ENCODE measurements at regions of chr2 and their contacts with region 1.

Region 1: GRCh38 chr2:161238560-161239325 is 69.5 kb upstream of the PSMD14 start:
- DNase-seq: no peak
- ATAC-seq: peak; percentile 44
- H3K4me3 ChIP-seq: peak overlapping the region; percentile 76
- H3K27ac ChIP-seq: peak overlapping the region; percentile 31
- H3K4me1 ChIP-seq: peaks cover 20% of the 10 kb centered on the region
- H3K27me3 ChIP-seq: no peaks in the 10 kb centered on the region
- CTCF ChIP-seq: no peak
- EP300 ChIP-seq: no peak
- POLR2A ChIP-seq: 0 out of 2 replicates have a peak, but pooled peaks have one; percentile 29
- RAD21 ChIP-seq: no peak

Region 2: GRCh38 chr2:161122772-161123530 is 115.8 kb before region 1 on chr2:
- CTCF ChIA-PET with region 1: no interaction called
- POLR2A ChIA-PET with region 1: no interaction called
- RAD21 ChIA-PET with region 1: no interaction called
- SMC1A ChIA-PET with region 1: no interaction called
- in situ Hi-C with region 1: no loop called
- intact Hi-C with region 1: no loop called
- DNase-seq: no peak
- ATAC-seq: peak; percentile 81
- H3K4me3 ChIP-seq: no peak overlapping the region
- H3K27ac ChIP-seq: no peak overlapping the region; the same call in 1 of the 2 replicates
- H3K4me1 ChIP-seq: no peaks in the 10 kb centered on the region
- H3K27me3 ChIP-seq: no peaks in the 10 kb centered on the region
- CTCF ChIP-seq: no peak
- EP300 ChIP-seq: no peak
- POLR2A ChIP-seq: no peak
- RAD21 ChIP-seq: no peak

Region 3: DNA sequence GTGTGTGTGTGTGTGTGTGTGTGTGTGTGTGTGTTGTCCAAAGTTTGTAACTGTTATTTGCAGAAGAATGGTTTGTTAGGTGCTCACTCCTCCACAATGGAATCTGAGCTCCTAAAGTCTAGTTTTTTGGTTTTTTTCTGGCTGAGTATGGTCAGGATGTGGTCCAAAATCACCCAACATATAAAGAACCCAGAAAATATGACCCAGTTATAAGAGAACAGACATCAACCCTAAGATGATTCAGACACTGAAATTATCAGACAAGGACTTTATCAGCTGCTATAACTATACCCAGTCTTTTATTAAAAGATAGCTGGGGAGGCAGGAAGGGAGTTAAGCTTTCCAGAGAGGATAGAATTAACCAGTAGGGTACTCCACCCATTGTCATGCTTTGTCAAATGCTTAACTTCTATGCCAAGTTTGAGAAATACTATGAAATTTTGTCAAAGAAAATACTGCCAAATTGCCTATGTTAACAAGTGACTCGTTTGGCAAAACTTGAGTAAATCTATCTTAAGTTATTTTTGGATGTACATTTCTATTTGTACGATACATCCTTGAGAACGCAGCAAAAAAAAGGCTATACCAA is 21.1 kb before region 1 on chr2:
- CTCF ChIA-PET with region 1: interaction called, 52 read pairs
- POLR2A ChIA-PET with region 1: interaction called, 3 read pairs
- RAD21 ChIA-PET with region 1: interaction called, 17 read pairs
- SMC1A ChIA-PET with region 1: interaction called, 46 read pairs
- in situ Hi-C with region 1: no loop called
- intact Hi-C with region 1: no loop called
- DNase-seq: no peak
- ATAC-seq: no peak
- H3K4me3 ChIP-seq: no peak overlapping the region
- H3K27ac ChIP-seq: no peak overlapping the region
- H3K4me1 ChIP-seq: no peaks in the 10 kb centered on the region
- H3K27me3 ChIP-seq: no peaks in the 10 kb centered on the region
- CTCF ChIP-seq: no peak
- EP300 ChIP-seq: no peak
- POLR2A ChIP-seq: no peak
- RAD21 ChIP-seq: no peak

Region 4: DNA sequence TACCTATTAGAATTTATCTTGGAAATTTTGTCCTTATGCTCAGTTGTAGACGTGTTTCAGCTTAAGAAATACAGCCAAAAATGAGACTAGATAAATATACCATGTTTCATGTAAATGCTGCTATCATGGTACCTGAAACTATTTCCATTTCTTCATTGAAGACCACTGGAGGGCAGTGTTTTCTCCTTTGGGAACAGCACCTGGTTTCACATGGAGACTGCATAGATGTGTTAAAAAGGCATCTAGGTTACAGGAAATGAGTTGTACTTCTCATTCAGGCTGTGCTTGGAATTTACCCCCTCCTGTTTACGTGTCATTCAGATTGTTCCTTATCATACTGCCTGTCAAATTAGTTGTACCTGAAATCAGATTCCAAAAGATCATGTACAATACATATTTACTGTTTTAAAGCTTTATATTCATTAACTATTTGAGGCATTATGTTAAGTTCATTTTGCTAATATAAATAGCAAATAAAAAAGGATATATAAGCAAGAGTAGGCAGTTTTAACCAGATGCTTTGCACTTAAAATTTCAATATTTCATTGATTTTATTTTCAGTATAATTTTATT is 12.2 kb after region 1 on chr2:
- CTCF ChIA-PET with region 1: interaction called, 34 read pairs
- POLR2A ChIA-PET with region 1: interaction called, 4 read pairs
- RAD21 ChIA-PET with region 1: interaction called, 7 read pairs
- SMC1A ChIA-PET with region 1: interaction called, 34 read pairs
- in situ Hi-C with region 1: no loop called
- intact Hi-C with region 1: no loop called
- DNase-seq: no peak
- ATAC-seq: peak; percentile 78
- H3K4me3 ChIP-seq: no peak overlapping the region
- H3K27ac ChIP-seq: no peak overlapping the region
- H3K4me1 ChIP-seq: no peaks in the 10 kb centered on the region
- H3K27me3 ChIP-seq: no peaks in the 10 kb centered on the region
- CTCF ChIP-seq: peak; percentile 48 to 58 (median 48); a peak in 5 of 6 replicates
- EP300 ChIP-seq: no peak
- POLR2A ChIP-seq: no peak
- RAD21 ChIP-seq: peak; percentile 56

Region 5: DNA sequence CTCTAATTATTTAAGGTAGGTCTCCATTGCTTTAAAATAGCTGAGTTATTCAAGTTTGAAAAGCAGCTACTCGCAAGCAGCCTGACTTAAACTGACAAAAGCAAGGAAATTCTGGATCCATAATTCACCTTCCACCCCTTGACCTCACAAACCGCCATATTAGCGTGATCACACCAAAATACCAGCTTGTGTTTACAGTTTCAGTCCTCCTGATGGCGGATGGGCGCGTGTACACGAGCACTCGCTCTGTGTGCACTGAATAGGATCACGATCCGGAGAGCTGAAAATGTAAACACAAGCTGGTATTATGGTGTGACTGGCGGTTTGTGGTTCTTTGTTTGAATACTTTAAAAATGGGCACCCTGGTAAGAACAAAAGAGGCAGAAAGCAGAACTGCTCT is 27.1 kb after region 1 on chr2:
- CTCF ChIA-PET with region 1: interaction called, 8 read pairs
- POLR2A ChIA-PET with region 1: no interaction called
- RAD21 ChIA-PET with region 1: interaction called, 4 read pairs
- SMC1A ChIA-PET with region 1: interaction called, 12 read pairs
- in situ Hi-C with region 1: no loop called
- intact Hi-C with region 1: no loop called
- DNase-seq: no peak
- ATAC-seq: no peak
- H3K4me3 ChIP-seq: no peak overlapping the region
- H3K27ac ChIP-seq: no peak overlapping the region
- H3K4me1 ChIP-seq: no peaks in the 10 kb centered on the region
- H3K27me3 ChIP-seq: no peaks in the 10 kb centered on the region
- CTCF ChIP-seq: no peak
- EP300 ChIP-seq: no peak
- POLR2A ChIP-seq: no peak
- RAD21 ChIP-seq: no peak

Region 6: GRCh38 chr2:161273038-161273760 is 34.5 kb after region 1 on chr2:
- CTCF ChIA-PET with region 1: interaction called, 15 read pairs
- POLR2A ChIA-PET with region 1: no interaction called
- RAD21 ChIA-PET with region 1: interaction called, 11 read pairs
- SMC1A ChIA-PET with region 1: interaction called, 32 read pairs
- in situ Hi-C with region 1: no loop called
- intact Hi-C with region 1: no loop called
- DNase-seq: peak; percentile 23
- ATAC-seq: peak; percentile 90
- H3K4me3 ChIP-seq: no peak overlapping the region
- H3K27ac ChIP-seq: no peak overlapping the region
- H3K4me1 ChIP-seq: no peaks in the 10 kb centered on the region
- H3K27me3 ChIP-seq: no peaks in the 10 kb centered on the region
- CTCF ChIP-seq: peak; percentile 45 to 66 (median 57); a peak in 5 of 6 replicates
- EP300 ChIP-seq: no peak
- POLR2A ChIP-seq: no peak
- RAD21 ChIP-seq: peak; percentile 82

Region 7: DNA sequence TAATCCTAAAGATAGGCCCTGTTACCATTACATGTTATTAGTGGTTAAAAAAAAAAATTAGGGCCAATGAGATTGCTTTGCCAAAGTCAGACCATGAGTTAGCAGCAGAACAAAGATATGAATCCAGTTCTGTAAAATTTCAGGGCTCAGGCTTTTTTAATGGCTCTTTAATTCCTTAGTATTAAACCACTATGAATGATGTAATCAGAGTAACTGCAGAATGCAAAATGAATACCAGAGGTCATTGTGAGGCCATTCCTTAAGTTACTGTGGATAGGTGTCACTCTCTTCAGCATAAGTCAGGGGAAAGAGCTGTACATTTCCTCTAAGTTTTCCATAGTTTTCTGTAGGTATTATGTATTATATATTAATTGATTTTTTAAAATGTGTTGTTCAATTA is 135.2 kb after region 1 on chr2:
- CTCF ChIA-PET with region 1: no interaction called
- POLR2A ChIA-PET with region 1: no interaction called
- RAD21 ChIA-PET with region 1: no interaction called
- SMC1A ChIA-PET with region 1: no interaction called
- in situ Hi-C with region 1: no loop called
- intact Hi-C with region 1: no loop called
- DNase-seq: no peak
- ATAC-seq: no peak
- H3K4me3 ChIP-seq: no peak overlapping the region
- H3K27ac ChIP-seq: no peak overlapping the region
- H3K4me1 ChIP-seq: no peaks in the 10 kb centered on the region
- H3K27me3 ChIP-seq: no peaks in the 10 kb centered on the region
- CTCF ChIP-seq: no peak
- EP300 ChIP-seq: no peak
- POLR2A ChIP-seq: no peak
- RAD21 ChIP-seq: no peak

Measured in GM12878 (cell line).